IMR-90 (cell line): ENCODE measurements at regions of chr1 and their contacts with region 1.

Region 1: DNA sequence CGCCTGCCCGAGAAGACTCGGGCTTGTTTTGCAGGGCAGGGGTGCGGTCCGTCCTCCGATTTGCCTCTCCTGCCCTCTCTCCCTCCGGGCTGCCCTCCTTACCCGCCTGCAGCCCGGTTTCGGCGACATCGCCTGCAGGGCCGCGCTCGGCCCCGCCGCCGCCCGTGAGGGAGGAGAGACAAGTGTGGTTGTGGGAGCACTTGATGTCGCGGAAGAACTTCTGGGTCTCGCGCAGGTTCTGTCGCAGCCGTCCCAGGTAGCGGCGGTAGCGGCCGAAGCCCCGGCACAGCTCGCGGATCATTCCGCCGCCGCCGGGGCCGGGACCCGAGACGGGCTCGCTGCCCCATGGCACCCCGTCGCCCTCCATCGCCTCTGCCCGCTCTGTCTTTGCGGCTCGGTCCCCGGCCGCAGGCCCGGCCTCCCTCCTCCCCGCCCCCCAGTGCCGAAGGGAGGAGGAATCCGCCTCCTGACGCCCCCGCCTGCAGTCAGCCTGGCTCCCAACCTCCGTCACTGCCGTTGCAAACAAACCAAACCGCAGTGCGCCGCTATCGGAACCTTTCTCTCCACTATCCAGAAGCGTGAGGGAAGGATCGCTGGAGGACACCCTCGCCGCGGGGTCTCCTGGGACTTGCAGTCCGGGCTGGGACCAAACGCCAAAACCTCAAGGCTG is at the start of gene DSTYK:
- DNase-seq: peak; percentile 97
- ATAC-seq: peak; percentile 95
- H3K4me3 ChIP-seq: peak within 1 kb of the TSS; percentile 68
- H3K27ac ChIP-seq: peak within 1 kb of the TSS; percentile 74
- H3K4me1 ChIP-seq: no peaks in the 10 kb centered on the region
- H3K27me3 ChIP-seq: no peaks in the 10 kb centered on the region
- CTCF ChIP-seq: no peak
- POLR2A ChIP-seq: peak; percentile 83
- RAD21 ChIP-seq: peak; percentile 9
- total RNA-seq, gene DSTYK: 18.3 and 19.2 TPM in 2 replicates

Region 2: DNA sequence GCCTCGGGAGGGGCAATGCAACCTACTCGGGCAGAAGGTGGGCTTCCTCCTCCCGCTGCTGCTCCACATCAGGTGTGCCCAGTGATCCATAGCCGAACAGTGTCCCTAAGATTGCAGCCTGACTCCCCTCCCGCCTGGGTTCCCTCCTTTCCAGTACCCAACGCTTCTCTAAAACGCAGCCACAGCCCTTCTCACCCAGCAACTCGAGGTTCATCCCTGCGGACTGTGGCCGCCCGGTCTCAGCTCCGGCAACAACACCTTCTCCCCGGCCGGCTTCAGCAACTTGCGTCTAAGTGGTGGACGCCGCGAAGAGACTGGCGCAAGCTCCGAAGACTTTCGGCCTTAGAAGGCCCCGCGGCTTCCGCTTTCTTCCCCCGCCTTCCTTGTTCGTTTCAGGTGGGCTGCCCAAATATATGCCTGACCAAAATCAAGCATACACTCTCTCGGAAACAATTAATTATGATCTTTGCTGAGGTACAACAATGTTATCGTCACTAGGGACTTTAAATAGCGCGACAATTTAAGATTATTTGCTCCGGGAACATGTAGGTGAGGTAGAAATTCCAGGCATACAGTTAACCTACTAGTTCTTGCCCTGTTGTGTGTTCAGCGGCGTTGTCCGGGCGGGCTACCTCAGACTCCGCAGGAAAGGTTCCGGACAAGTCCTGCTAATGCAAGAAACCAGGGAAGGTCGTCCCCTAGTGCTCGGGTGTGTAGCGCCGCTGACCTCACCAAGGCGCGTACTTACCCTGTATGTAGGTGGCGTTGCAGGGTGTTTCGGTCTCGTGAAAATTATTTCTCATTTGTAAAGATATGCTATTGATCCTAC is 89.4 kb before region 1 on chr1 and contains the start of gene RBBP5:
- CTCF ChIA-PET with region 1: no interaction called
- POLR2A ChIA-PET with region 1: no interaction called
- dilution Hi-C with region 1: no loop called
- in situ Hi-C with region 1: no loop called
- intact Hi-C with region 1: loop called (anchors 1 kb)
- DNase-seq: peak; percentile 98
- ATAC-seq: peak; percentile 99
- H3K4me3 ChIP-seq: peak within 1 kb of the TSS; percentile 89
- H3K27ac ChIP-seq: peak within 1 kb of the TSS; percentile 88
- H3K4me1 ChIP-seq: peaks cover 2% of the 10 kb centered on the region; the same call in 1 of the 2 replicates
- H3K27me3 ChIP-seq: no peaks in the 10 kb centered on the region
- CTCF ChIP-seq: peak; percentile 89
- POLR2A ChIP-seq: peak; percentile 95
- RAD21 ChIP-seq: peak; percentile 61
- total RNA-seq, gene RBBP5: 33.9 and 37.5 TPM in 2 replicates

Region 3: GRCh38 chr1:205141236-205142101 is 69.8 kb before region 1 on chr1:
- CTCF ChIA-PET with region 1: interaction called, 7 read pairs
- POLR2A ChIA-PET with region 1: no interaction called
- dilution Hi-C with region 1: no loop called
- in situ Hi-C with region 1: no loop called
- intact Hi-C with region 1: loop called (anchors 5 kb)
- DNase-seq: peak; percentile 86
- ATAC-seq: peak; percentile 79
- H3K4me3 ChIP-seq: no peak overlapping the region
- H3K27ac ChIP-seq: no peak overlapping the region
- H3K4me1 ChIP-seq: peaks cover 16% of the 10 kb centered on the region
- H3K27me3 ChIP-seq: no peaks in the 10 kb centered on the region
- CTCF ChIP-seq: peak; percentile 73
- POLR2A ChIP-seq: no peak
- RAD21 ChIP-seq: peak; percentile 71

Region 4: GRCh38 chr1:205172729-205173366 is 38.5 kb before region 1 on chr1:
- CTCF ChIA-PET with region 1: interaction called, 3 read pairs
- POLR2A ChIA-PET with region 1: no interaction called
- dilution Hi-C with region 1: no loop called
- in situ Hi-C with region 1: no loop called
- intact Hi-C with region 1: loop called (anchors 1 kb)
- DNase-seq: peak; percentile 99
- ATAC-seq: peak; percentile 77
- H3K4me3 ChIP-seq: no peak overlapping the region
- H3K27ac ChIP-seq: peak overlapping the region; percentile 90
- H3K4me1 ChIP-seq: peaks cover 8% of the 10 kb centered on the region
- H3K27me3 ChIP-seq: no peaks in the 10 kb centered on the region
- CTCF ChIP-seq: no peak
- POLR2A ChIP-seq: no peak
- RAD21 ChIP-seq: no peak

Region 5: DNA sequence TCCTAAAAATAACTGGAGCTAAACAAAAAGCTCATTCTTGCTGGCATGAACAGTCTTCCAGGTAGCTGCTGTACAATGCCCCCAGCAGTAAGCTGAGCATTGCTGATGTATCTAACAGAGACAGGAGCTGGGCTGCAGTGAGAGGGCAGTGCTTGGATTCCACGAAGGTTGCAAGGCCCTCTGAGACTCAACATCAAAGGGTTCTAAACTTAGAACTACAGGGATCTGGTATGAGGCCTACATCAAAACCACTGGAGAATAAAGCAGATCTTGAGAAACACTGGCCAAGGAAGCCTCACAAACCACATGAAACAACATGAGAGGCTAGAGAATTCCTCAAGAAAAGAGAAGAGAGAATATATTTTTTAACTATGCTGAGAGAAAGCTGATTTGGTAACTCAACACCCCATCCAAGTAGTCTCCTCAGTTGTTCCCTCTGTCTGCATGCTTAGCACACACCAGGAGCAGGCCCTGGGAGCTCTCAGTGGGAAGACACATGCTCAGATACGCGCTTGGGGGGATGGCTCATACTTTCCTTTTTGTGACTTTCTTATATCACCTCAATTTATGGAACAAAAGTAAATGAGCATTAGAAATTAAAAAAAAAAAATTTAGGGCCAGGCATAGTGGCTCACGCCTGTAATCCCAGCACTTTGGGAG is 27.5 kb before region 1 on chr1:
- CTCF ChIA-PET with region 1: no interaction called
- POLR2A ChIA-PET with region 1: no interaction called
- dilution Hi-C with region 1: no loop called
- in situ Hi-C with region 1: no loop called
- intact Hi-C with region 1: no loop called
- DNase-seq: peak; percentile 54
- ATAC-seq: peak; percentile 46
- H3K4me3 ChIP-seq: no peak overlapping the region
- H3K27ac ChIP-seq: peak overlapping the region; percentile 39; the same call in 1 of the 2 replicates
- H3K4me1 ChIP-seq: peaks cover 11% of the 10 kb centered on the region
- H3K27me3 ChIP-seq: no peaks in the 10 kb centered on the region
- CTCF ChIP-seq: no peak
- POLR2A ChIP-seq: no peak
- RAD21 ChIP-seq: no peak

Region 6: GRCh38 chr1:205248793-205249601 is 37.7 kb after region 1 on chr1:
- CTCF ChIA-PET with region 1: no interaction called
- POLR2A ChIA-PET with region 1: no interaction called
- dilution Hi-C with region 1: no loop called
- in situ Hi-C with region 1: no loop called
- intact Hi-C with region 1: loop called (anchors 5 kb)
- DNase-seq: peak; percentile 75
- ATAC-seq: peak; percentile 74
- H3K4me3 ChIP-seq: no peak overlapping the region
- H3K27ac ChIP-seq: peak overlapping the region; percentile 10; the same call in 1 of the 2 replicates
- H3K4me1 ChIP-seq: peaks cover 26% of the 10 kb centered on the region
- H3K27me3 ChIP-seq: no peaks in the 10 kb centered on the region
- CTCF ChIP-seq: no peak
- POLR2A ChIP-seq: no peak
- RAD21 ChIP-seq: no peak